Left ventricle myocardium superior (tissue), 1 donor: ENCODE measurements at regions of chr4 and their contacts with region 1.

Region 1: GRCh38 chr4:122602277-122603142 is 18.4 kb downstream of the IL21 start:
- DNase-seq: no peak
- ATAC-seq: peak; percentile 67

Region 2: DNA sequence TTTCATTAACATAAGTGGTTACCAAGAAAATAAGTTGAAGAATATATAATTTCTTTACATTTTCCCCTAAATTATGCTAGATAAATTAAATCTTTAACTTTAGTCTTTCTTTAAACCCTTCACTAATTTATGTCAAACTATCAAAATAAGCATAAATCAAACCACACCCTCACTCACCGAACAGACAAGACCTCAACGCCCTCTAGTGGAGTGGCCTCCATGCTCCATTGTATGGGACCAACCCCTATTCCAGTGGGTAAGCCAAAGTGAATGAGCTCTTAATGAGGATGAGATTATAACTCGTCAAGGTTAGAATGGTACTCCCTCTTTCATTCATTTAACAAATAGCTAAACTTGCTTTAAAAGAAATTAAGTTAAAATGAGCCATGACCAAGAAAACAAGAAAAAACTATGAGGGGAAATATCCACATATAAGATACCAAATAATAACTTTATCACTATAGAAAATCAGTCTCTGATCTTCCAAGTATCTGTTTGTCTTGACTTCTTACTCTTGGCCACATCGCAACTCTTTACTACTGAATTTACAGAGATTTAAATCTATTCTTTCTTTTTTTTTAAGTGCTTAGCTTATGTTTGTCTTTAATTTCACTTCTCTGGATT is 114.4 kb after region 1 on chr4:
- intact Hi-C with region 1: loop called (anchors 5 kb)
- DNase-seq: peak; percentile 65
- ATAC-seq: peak; percentile 86

Region 3: DNA sequence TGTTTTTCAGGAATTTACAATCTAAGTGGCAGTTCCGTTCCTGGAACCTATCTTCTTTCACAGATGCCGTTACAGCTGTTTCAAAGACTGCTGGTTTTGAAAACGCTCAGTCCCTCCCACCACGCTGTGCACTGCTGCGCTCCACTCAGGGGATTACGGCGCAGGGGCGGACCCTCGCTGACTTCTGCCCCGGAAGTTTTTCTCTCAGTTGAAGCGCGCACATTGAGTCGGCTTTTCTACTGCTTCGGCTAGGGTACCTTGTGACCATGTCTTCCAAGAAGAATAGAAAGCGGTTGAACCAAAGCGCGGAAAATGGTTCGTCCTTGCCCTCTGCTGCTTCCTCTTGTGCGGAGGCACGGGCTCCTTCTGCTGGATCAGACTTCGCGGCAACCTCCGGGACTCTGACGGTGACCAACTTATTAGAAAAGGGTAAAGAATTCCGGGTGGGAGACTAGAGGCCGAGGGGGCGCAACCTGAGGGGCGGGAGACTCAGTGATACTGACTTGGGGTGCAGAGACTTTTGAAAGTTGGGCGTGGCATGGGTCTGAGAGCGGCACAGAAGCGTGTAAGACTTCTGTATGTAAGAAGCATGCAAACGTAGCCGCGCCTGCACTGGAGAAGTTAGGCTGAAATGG is 320.5 kb after region 1 on chr4:
- intact Hi-C with region 1: loop called (anchors 10 kb)
- DNase-seq: peak; percentile 84
- ATAC-seq: peak; percentile 98